CD8-positive, alpha-beta T cell (primary cell): ENCODE measurements at regions of chr20 and their contacts with region 1.

Region 1: GRCh38 chr20:10536531-10536930 is 101.4 kb downstream of the SLX4IP start:
- DNase-seq: peak in 4 of 9 experiments; percentile 9 to 33 (median 30)
- ATAC-seq: no peak
- H3K4me3 ChIP-seq: no peak overlapping the region
- H3K4me3 Mint-ChIP-seq: no peak overlapping the region
- H3K27ac ChIP-seq: no peak overlapping the region
- H3K27ac Mint-ChIP-seq: no peak overlapping the region
- H3K4me1 ChIP-seq: peaks cover 15% of the 10 kb centered on the region
- H3K4me1 Mint-ChIP-seq: peaks cover 22% of the 10 kb centered on the region
- H3K27me3 ChIP-seq: no peaks in the 10 kb centered on the region
- H3K27me3 Mint-ChIP-seq: no peaks in the 10 kb centered on the region
- CTCF ChIP-seq: no peak

Region 2: DNA sequence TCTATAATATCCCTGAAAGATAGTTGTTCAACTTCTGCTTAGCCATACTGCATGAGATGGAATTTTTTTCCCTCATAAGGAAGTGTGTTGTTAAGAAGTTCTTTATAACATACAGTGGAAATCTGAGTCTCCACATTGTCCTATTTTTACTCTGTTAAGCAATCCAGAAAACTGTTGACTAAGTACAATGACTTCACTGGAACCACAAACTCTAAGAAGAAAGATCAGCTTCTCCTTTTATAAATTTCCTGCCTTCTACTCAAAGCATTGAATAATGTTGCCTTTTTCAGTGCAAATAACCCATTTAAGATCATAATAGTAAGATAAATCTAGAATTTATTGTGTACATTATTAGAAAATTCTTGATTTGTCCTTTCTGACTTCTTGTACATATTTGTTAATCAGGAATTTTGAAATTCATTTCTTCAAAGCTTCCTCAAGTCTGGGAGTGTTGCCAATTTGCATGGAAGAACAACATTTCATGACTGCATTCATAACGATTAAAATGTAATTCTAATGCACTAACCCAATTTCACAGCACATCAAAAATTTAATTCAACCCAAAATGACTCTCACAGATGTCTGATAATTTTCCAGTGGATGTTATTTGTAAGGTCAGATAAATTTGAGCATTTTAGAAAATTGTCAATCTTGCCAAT is 547.3 kb before region 1 on chr20:
- CTCF ChIA-PET with region 1: no interaction called
- POLR2A ChIA-PET with region 1: no interaction called
- intact Hi-C with region 1: loop called in 1 of 2 experiments (anchors 10 kb)
- DNase-seq: no peak
- ATAC-seq: no peak
- H3K4me3 ChIP-seq: no peak overlapping the region
- H3K4me3 Mint-ChIP-seq: no peak overlapping the region
- H3K27ac ChIP-seq: no peak overlapping the region
- H3K27ac Mint-ChIP-seq: no peak overlapping the region
- H3K4me1 ChIP-seq: no peaks in the 10 kb centered on the region
- H3K4me1 Mint-ChIP-seq: no peaks in the 10 kb centered on the region
- H3K27me3 ChIP-seq: no peaks in the 10 kb centered on the region
- H3K27me3 Mint-ChIP-seq: peaks cover 12% of the 10 kb centered on the region
- CTCF ChIP-seq: no peak

Region 3: DNA sequence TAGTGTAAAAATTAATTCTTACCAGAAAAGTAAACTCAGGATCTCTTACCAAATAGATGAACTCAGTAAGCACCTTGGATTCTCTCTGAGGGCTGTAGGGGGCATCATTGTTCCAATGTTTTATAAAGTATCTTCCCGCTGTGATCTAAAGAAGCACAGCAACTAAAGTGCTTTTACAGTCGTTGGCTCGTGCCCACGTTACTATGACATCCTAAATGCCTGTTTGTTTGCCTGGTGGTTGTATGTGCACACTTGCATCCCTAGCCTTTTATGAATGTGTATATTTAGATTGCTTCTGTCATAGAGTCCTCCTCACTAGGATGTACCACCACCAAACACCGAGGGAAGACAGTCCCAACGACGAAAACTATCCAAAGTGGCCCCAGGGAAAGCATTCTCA is 66.9 kb before region 1 on chr20:
- CTCF ChIA-PET with region 1: interaction called, 3 read pairs
- POLR2A ChIA-PET with region 1: no interaction called
- intact Hi-C with region 1: loop called (anchors 1 to 5 kb)
- DNase-seq: peak in 3 of 9 experiments; percentile 13 to 67 (median 55)
- ATAC-seq: peak; percentile 36
- H3K4me3 ChIP-seq: no peak overlapping the region
- H3K4me3 Mint-ChIP-seq: no peak overlapping the region
- H3K27ac ChIP-seq: no peak overlapping the region
- H3K27ac Mint-ChIP-seq: no peak overlapping the region
- H3K4me1 ChIP-seq: no peaks in the 10 kb centered on the region
- H3K4me1 Mint-ChIP-seq: peaks cover 9% of the 10 kb centered on the region
- H3K27me3 ChIP-seq: no peaks in the 10 kb centered on the region
- H3K27me3 Mint-ChIP-seq: no peaks in the 10 kb centered on the region
- CTCF ChIP-seq: peak; percentile 36

Region 4: DNA sequence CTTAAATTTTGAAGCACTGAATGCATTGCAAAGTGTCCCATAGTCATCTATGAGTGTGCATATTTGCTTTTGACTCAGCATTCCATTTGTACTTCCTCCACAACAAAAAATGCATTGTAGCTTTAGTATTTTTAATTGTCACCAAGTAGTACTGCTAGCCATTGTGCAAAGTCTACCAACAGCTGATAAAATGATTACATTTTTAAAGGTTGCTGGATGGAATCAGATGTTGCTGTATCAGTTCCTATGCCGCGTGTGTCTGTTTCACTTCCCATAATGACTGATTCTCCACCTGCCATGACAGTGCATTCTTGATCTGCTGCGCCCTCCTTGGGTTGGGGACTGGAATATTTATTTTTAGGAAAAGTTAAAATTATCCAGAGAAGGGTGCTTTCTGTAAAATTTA is 60.2 kb before region 1 on chr20:
- CTCF ChIA-PET with region 1: interaction called, 3 read pairs
- POLR2A ChIA-PET with region 1: no interaction called
- intact Hi-C with region 1: loop called in 1 of 2 experiments (anchors 5 kb)
- DNase-seq: peak in 1 of 9 experiments; percentile 17
- ATAC-seq: no peak
- H3K4me3 ChIP-seq: no peak overlapping the region
- H3K4me3 Mint-ChIP-seq: no peak overlapping the region
- H3K27ac ChIP-seq: no peak overlapping the region
- H3K27ac Mint-ChIP-seq: no peak overlapping the region
- H3K4me1 ChIP-seq: no peaks in the 10 kb centered on the region
- H3K4me1 Mint-ChIP-seq: peaks cover 18% of the 10 kb centered on the region
- H3K27me3 ChIP-seq: no peaks in the 10 kb centered on the region
- H3K27me3 Mint-ChIP-seq: no peaks in the 10 kb centered on the region
- CTCF ChIP-seq: no peak

Region 5: DNA sequence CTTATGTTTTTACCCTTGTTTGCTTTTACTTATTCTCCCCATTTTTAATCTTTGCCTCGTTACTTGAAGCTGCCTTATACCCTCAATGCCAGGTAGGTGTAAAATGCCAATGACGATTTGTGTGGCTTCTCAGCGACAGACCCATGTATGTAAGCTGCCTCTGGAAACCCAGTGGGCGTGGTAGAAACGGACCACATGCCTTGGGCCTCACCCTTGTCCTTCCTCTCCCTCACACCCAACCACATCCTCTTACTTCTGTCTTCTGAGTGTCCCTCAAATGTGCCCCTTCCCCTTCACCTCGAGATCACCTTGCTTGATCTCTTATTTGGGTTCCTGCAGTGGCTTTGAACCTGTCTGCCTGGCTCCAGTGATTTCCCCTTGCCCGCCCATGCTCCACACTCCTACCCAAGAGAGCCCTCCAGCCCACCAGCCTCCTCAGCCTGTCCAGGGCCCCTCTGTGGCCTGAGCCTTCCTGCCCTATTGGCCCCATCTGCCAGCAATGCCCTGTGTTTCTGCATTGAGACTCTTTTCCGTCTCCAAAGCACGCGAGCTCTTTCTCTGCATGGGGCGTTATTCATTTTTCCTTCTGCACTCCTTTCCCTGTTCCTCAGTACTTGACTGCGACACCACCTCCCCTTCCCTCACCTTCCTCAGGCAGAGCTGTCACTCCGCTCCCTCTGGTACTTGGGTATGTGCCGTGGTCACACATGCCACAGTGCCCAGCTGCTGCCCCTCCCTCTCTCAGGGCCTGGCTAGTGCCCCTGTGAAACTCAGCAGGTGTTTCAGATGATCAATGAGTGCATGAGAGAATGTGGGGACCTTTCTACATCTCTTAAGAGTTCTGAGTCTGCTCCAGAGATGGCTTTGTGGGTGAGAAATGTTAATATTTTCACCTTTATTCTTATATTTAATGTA is 13.9 kb after region 1 on chr20:
- CTCF ChIA-PET with region 1: no interaction called
- POLR2A ChIA-PET with region 1: no interaction called
- intact Hi-C with region 1: no loop called
- DNase-seq: peak in 2 of 9 experiments; percentile 13 to 40
- ATAC-seq: peak; percentile 38
- H3K4me3 ChIP-seq: no peak overlapping the region
- H3K4me3 Mint-ChIP-seq: no peak overlapping the region
- H3K27ac ChIP-seq: no peak overlapping the region
- H3K27ac Mint-ChIP-seq: no peak overlapping the region
- H3K4me1 ChIP-seq: peaks cover 11% of the 10 kb centered on the region
- H3K4me1 Mint-ChIP-seq: peaks cover 29% of the 10 kb centered on the region
- H3K27me3 ChIP-seq: no peaks in the 10 kb centered on the region
- H3K27me3 Mint-ChIP-seq: no peaks in the 10 kb centered on the region
- CTCF ChIP-seq: no peak

Region 6: DNA sequence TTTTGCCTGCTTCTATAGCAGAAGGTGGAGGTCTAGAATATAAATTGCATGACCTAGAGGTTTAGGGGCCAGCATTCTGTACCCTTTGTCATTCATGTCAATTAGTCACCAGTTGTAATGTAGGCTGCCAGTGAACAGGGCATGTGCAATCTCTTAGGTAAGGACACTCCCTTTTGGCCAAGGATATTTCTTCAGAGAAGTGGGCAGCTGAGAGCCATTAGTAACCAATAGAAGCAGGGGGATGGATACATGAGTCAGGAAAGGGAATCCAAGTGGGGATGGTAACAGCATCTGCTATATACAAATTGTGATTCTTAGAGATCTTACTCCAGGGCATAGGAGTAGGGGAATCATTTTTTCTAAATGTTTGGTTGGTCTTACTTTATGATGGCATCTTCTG is 631.5 kb after region 1 on chr20:
- CTCF ChIA-PET with region 1: no interaction called
- POLR2A ChIA-PET with region 1: no interaction called
- intact Hi-C with region 1: no loop called
- DNase-seq: no peak
- ATAC-seq: no peak
- H3K4me3 ChIP-seq: no peak overlapping the region
- H3K4me3 Mint-ChIP-seq: no peak overlapping the region
- H3K27ac ChIP-seq: no peak overlapping the region
- H3K27ac Mint-ChIP-seq: no peak overlapping the region
- H3K4me1 ChIP-seq: no peaks in the 10 kb centered on the region
- H3K4me1 Mint-ChIP-seq: no peaks in the 10 kb centered on the region
- H3K27me3 ChIP-seq: no peaks in the 10 kb centered on the region
- H3K27me3 Mint-ChIP-seq: no peaks in the 10 kb centered on the region
- CTCF ChIP-seq: no peak